CD8-positive, alpha-beta memory T cell (primary cell): ENCODE measurements at regions of chr19 and their contacts with region 1.

Region 1: GRCh38 chr19:14383661-14384555 is 2.7 kb downstream of the ADGRE5 start:
- DNase-seq: peak in 4 of 5 donors; percentile 60 to 87 (median 72)
- H3K4me3 ChIP-seq: peak overlapping the region; percentile 64
- H3K4me3 Mint-ChIP-seq: peak overlapping the region; percentile 84 to 100 (median 93)
- H3K27ac ChIP-seq: peak overlapping the region; percentile 99
- H3K27ac Mint-ChIP-seq: peak overlapping the region; percentile 91 to 99 (median 97)
- H3K4me1 ChIP-seq: peaks cover 33% of the 10 kb centered on the region
- H3K4me1 Mint-ChIP-seq: peaks cover 41 to 60% (median 44%) of the 10 kb centered on the region in 3 donors
- H3K27me3 ChIP-seq: no peaks in the 10 kb centered on the region
- H3K27me3 Mint-ChIP-seq: peaks cover 0 to 16% of the 10 kb centered on the region in 2 donors

Region 2: GRCh38 chr19:14354445-14354844 is 29.5 kb before region 1 on chr19:
- CTCF ChIA-PET with region 1: interaction called, 186 read pairs
- POLR2A ChIA-PET with region 1: interaction called, 13 read pairs
- DNase-seq: no peak
- H3K4me3 ChIP-seq: no peak overlapping the region
- H3K4me3 Mint-ChIP-seq: no peak overlapping the region
- H3K27ac ChIP-seq: no peak overlapping the region
- H3K27ac Mint-ChIP-seq: peak overlapping the region in 4 of 8 donors; percentile 43 to 87 (median 82)
- H3K4me1 ChIP-seq: peaks cover 46% of the 10 kb centered on the region
- H3K4me1 Mint-ChIP-seq: peaks cover 21 to 45% (median 34%) of the 10 kb centered on the region in 3 donors
- H3K27me3 ChIP-seq: no peaks in the 10 kb centered on the region
- H3K27me3 Mint-ChIP-seq: no peaks in the 10 kb centered on the region

Region 3: GRCh38 chr19:14405758-14406644 is 22.1 kb after region 1 on chr19:
- CTCF ChIA-PET with region 1: interaction called, 84 read pairs
- POLR2A ChIA-PET with region 1: interaction called, 15 read pairs
- DNase-seq: peak; percentile 86 to 91 (median 88)
- H3K4me3 ChIP-seq: no peak overlapping the region
- H3K4me3 Mint-ChIP-seq: peak overlapping the region in 3 of 7 donors; percentile 19 to 83 (median 77)
- H3K27ac ChIP-seq: no peak overlapping the region
- H3K27ac Mint-ChIP-seq: peak overlapping the region in 7 of 8 donors; percentile 59 to 97 (median 87)
- H3K4me1 ChIP-seq: peaks cover 40% of the 10 kb centered on the region
- H3K4me1 Mint-ChIP-seq: peaks cover 11 to 55% (median 26%) of the 10 kb centered on the region in 3 donors
- H3K27me3 ChIP-seq: no peaks in the 10 kb centered on the region
- H3K27me3 Mint-ChIP-seq: peaks cover 0 to 13% of the 10 kb centered on the region in 2 donors

Region 4: GRCh38 chr19:14419106-14419813 is 35.4 kb after region 1 on chr19 and contains the start of gene DDX39A:
- CTCF ChIA-PET with region 1: no interaction called
- POLR2A ChIA-PET with region 1: interaction called, 11 read pairs
- DNase-seq: peak; percentile 95 to 99 (median 97)
- H3K4me3 ChIP-seq: peak within 1 kb of the TSS; percentile 72
- H3K4me3 Mint-ChIP-seq: peak within 1 kb of the TSS; percentile 86 to 97 (median 93)
- H3K27ac ChIP-seq: peak within 1 kb of the TSS; percentile 94
- H3K27ac Mint-ChIP-seq: peak within 1 kb of the TSS; percentile 91 to 98 (median 98)
- H3K4me1 ChIP-seq: peaks cover 39% of the 10 kb centered on the region
- H3K4me1 Mint-ChIP-seq: peaks cover 34 to 49% (median 47%) of the 10 kb centered on the region in 3 donors
- H3K27me3 ChIP-seq: no peaks in the 10 kb centered on the region
- H3K27me3 Mint-ChIP-seq: peaks cover 0 to 9% of the 10 kb centered on the region in 2 donors
- total RNA-seq, gene DDX39A: 298 to 302 TPM